CD4-positive, alpha-beta memory T cell (primary cell): ENCODE measurements at regions of chr15 and their contacts with region 1.

Region 1: GRCh38 chr15:50354838-50355618 is at the start of gene GABPB1:
- DNase-seq: peak; percentile 87 to 93 (median 92)
- H3K4me3 ChIP-seq: peak within 1 kb of the TSS; percentile 80 to 95
- H3K4me3 Mint-ChIP-seq: peak within 1 kb of the TSS; percentile 97 to 100 (median 99)
- H3K27ac ChIP-seq: peak within 1 kb of the TSS; percentile 99
- H3K27ac Mint-ChIP-seq: peak within 1 kb of the TSS; percentile 99 to 100 (median 99)
- H3K4me1 ChIP-seq: peaks cover 56% of the 10 kb centered on the region
- H3K4me1 Mint-ChIP-seq: peaks cover 38 to 77% (median 46%) of the 10 kb centered on the region in 4 donors
- H3K27me3 ChIP-seq: no peaks in the 10 kb centered on the region
- H3K27me3 Mint-ChIP-seq: peaks cover 0 to 2% of the 10 kb centered on the region in 2 donors
- total RNA-seq, gene GABPB1: 15.1 to 17.0 TPM

Region 2: GRCh38 chr15:48810414-48811317 is 1544.4 kb before region 1 on chr15 and contains the start of gene CEP152:
- CTCF ChIA-PET with region 1: no interaction called
- POLR2A ChIA-PET with region 1: interaction called, 15 read pairs
- intact Hi-C with region 1: loop called (anchors 2 kb)
- DNase-seq: peak; percentile 97 to 99 (median 98)
- H3K4me3 ChIP-seq: peak within 1 kb of the TSS; percentile 91 to 99
- H3K4me3 Mint-ChIP-seq: peak within 1 kb of the TSS; percentile 80 to 95 (median 94)
- H3K27ac ChIP-seq: peak within 1 kb of the TSS; percentile 67
- H3K27ac Mint-ChIP-seq: peak within 1 kb of the TSS; percentile 82 to 95 (median 88)
- H3K4me1 ChIP-seq: peaks cover 16% of the 10 kb centered on the region
- H3K4me1 Mint-ChIP-seq: peaks cover 19 to 38% (median 24%) of the 10 kb centered on the region in 4 donors
- H3K27me3 ChIP-seq: no peaks in the 10 kb centered on the region
- H3K27me3 Mint-ChIP-seq: peaks cover 0 to 5% of the 10 kb centered on the region in 2 donors
- total RNA-seq, gene CEP152: 14.4 to 15.3 TPM

Region 3: DNA sequence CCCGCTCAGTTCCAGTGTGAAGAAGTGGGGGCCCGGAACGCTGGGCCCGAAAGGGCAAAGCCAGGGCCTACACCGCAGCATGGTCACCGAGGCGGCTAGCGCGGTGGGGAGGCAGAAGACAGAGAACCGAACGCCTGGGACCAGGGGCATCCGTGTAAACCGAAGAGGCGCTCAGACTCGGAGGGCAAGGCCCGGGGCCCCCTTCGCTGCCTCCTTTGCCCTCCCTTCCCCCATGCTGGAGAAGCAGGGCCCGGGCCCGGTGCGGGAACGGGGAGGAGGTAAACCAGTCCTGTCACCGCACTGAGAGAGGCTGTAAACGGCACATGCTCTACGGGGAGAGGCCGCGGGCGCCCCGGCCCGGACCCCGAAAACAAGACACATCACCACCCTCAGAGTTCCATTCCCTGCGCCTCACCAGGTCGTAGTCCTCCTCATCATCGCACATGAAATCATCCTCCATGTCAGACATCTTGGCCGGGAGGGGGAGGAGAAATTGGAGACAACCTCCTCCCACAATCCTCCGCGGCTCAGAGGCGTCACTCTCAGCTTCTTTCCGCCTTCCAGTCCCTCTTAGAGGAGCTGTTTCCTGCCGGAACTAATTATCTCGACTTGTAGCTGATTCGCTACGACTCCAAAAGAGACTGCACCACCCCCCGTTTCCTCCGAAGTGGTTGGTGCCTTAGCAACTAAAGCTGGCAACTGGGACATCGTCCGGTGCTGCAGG is 1199.8 kb before region 1 on chr15 and contains the start of gene COPS2:
- CTCF ChIA-PET with region 1: no interaction called
- POLR2A ChIA-PET with region 1: interaction called, 17 read pairs
- intact Hi-C with region 1: loop called (anchors 1 kb)
- DNase-seq: peak; percentile 93 to 97 (median 95)
- H3K4me3 ChIP-seq: peak within 1 kb of the TSS; percentile 74 to 88
- H3K4me3 Mint-ChIP-seq: peak within 1 kb of the TSS; percentile 97 to 100 (median 100)
- H3K27ac ChIP-seq: peak within 1 kb of the TSS; percentile 94
- H3K27ac Mint-ChIP-seq: peak within 1 kb of the TSS; percentile 97 to 100 (median 99)
- H3K4me1 ChIP-seq: peaks cover 52% of the 10 kb centered on the region
- H3K4me1 Mint-ChIP-seq: peaks cover 33 to 61% (median 49%) of the 10 kb centered on the region in 4 donors
- H3K27me3 ChIP-seq: no peaks in the 10 kb centered on the region
- H3K27me3 Mint-ChIP-seq: no peaks in the 10 kb centered on the region
- total RNA-seq, gene COPS2: 55.5 to 56.9 TPM

Region 4: DNA sequence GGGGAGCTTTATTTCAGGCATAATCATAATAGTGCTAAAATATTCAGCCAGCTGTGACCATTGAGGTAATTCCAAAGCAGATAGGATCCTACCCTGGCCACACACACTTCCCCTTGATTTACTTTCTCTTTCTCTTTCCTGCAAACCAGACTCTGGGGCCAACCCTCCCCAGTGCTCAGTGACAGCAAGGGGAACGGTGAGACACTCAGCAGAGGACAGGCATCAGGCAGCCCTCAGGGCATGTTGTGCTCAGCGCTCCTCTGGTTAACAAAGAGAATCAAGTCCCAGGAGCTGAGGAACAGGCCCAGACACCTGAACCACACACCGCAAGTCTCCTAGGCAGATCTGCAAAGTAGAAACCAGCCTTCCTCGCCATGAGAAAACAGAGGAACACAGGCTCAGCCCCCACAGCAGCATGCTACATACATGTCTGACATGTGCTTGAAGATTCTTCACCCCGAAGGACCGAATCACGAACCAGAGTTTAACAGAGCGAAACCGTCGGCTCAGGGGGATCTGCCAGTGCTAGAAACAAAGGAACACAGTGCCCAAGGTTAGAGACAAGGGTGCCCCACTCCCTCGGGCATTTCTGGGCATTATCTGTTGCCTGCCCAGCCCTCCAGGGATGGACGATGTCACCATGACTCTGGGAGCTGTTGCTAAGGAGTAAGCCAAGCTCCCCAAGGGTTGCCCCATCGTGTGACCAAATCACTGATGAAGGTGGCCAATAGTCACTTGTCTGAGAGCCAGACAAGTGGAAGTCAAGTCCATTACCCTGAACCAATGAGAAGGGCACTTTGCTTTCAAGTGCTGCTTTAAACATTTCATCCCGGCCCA is 107.0 kb before region 1 on chr15:
- CTCF ChIA-PET with region 1: no interaction called
- POLR2A ChIA-PET with region 1: interaction called, 31 read pairs
- intact Hi-C with region 1: no loop called
- DNase-seq: peak; percentile 51 to 64 (median 60)
- H3K4me3 ChIP-seq: peak overlapping the region in 1 of 2 donors; percentile 15
- H3K4me3 Mint-ChIP-seq: peak overlapping the region; percentile 79 to 91 (median 85)
- H3K27ac ChIP-seq: peak overlapping the region; percentile 45
- H3K27ac Mint-ChIP-seq: peak overlapping the region; percentile 91 to 98 (median 96)
- H3K4me1 ChIP-seq: peaks cover 20% of the 10 kb centered on the region
- H3K4me1 Mint-ChIP-seq: peaks cover 21 to 30% (median 25%) of the 10 kb centered on the region in 4 donors
- H3K27me3 ChIP-seq: no peaks in the 10 kb centered on the region
- H3K27me3 Mint-ChIP-seq: no peaks in the 10 kb centered on the region

Region 5: DNA sequence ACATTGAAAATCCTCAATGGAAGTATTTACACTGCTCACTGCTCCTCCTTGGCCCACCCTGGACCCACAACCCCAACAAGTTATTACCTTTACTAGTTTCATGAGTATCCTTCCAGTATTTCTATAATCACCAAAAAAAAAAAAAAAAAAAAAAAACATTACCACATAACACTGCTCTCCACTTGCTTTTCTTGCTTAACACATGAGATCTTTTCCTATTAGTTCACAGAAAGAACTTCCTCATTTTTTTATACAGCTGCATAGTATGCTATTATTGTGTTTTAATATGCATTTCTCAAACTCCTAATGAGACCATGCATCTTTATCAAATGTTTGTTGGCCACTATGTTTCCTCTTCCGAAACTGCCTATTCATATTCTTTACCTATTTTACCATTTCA is 14.6 kb before region 1 on chr15:
- CTCF ChIA-PET with region 1: no interaction called
- POLR2A ChIA-PET with region 1: interaction called, 18 read pairs
- intact Hi-C with region 1: no loop called
- DNase-seq: no peak
- H3K4me3 ChIP-seq: no peak overlapping the region
- H3K4me3 Mint-ChIP-seq: peak overlapping the region in 2 of 8 donors; percentile 2 to 38
- H3K27ac ChIP-seq: no peak overlapping the region
- H3K27ac Mint-ChIP-seq: no peak overlapping the region
- H3K4me1 ChIP-seq: no peaks in the 10 kb centered on the region
- H3K4me1 Mint-ChIP-seq: peaks cover 20 to 25% (median 23%) of the 10 kb centered on the region in 4 donors
- H3K27me3 ChIP-seq: no peaks in the 10 kb centered on the region
- H3K27me3 Mint-ChIP-seq: no peaks in the 10 kb centered on the region

Region 6: GRCh38 chr15:50686468-50687301 is 331.7 kb after region 1 on chr15 and contains the start of gene TRPM7:
- CTCF ChIA-PET with region 1: no interaction called
- POLR2A ChIA-PET with region 1: interaction called, 7 read pairs
- intact Hi-C with region 1: loop called (anchors 1 kb)
- DNase-seq: peak; percentile 86 to 90 (median 90)
- H3K4me3 ChIP-seq: peak within 1 kb of the TSS; percentile 89 to 99
- H3K4me3 Mint-ChIP-seq: peak within 1 kb of the TSS; percentile 98 to 100 (median 99)
- H3K27ac ChIP-seq: peak within 1 kb of the TSS; percentile 99
- H3K27ac Mint-ChIP-seq: peak within 1 kb of the TSS; percentile 98 to 100 (median 99)
- H3K4me1 ChIP-seq: peaks cover 52% of the 10 kb centered on the region
- H3K4me1 Mint-ChIP-seq: peaks cover 32 to 61% (median 45%) of the 10 kb centered on the region in 4 donors
- H3K27me3 ChIP-seq: no peaks in the 10 kb centered on the region
- H3K27me3 Mint-ChIP-seq: no peaks in the 10 kb centered on the region
- total RNA-seq, gene TRPM7: 65.3 to 66.7 TPM

Region 7: DNA sequence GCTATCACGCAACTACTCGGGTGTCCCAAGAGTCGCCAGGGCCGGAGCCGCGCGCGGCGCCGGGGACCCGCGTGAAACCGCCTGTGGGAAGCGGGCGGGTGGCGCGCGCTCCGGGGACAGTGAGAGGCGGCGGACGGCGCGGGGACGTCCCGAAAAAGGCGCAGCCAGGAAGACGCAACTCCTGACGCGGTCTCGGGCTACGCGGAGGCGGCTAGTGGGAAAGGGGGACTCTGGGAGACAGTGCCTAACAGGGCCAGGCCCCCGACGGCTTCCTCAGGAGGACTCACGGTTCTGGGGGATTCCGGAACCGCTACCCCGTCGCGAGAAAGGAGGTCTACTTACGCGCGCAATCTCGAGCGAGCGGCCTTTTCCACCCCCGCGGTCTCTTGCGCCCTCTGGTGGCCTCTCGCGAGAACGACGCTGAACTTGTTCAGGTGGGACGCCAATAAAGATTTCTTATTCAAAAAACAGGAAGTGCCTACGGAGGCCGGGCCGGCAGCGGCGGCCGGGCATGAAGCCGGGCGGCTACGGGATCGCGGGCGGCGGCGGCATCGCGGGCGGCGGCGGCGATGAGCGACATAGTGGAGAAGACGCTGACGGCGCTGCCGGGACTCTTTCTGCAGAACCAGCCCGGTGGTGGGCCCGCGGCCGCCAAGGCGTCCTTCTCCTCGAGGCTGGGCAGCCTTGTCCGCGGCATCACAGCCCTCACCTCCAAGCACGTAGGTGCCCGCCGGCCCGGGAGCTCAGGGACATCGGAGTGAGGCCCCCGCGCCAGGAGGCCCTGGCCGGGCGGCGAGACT is 553.4 kb after region 1 on chr15 and contains the start of gene AP4E1:
- CTCF ChIA-PET with region 1: no interaction called
- POLR2A ChIA-PET with region 1: interaction called, 32 read pairs
- intact Hi-C with region 1: loop called (anchors 1 kb)
- DNase-seq: peak; percentile 93 to 96 (median 94)
- H3K4me3 ChIP-seq: peak within 1 kb of the TSS; percentile 57 to 89
- H3K4me3 Mint-ChIP-seq: peak within 1 kb of the TSS; percentile 90 to 98 (median 92)
- H3K27ac ChIP-seq: peak within 1 kb of the TSS; percentile 100
- H3K27ac Mint-ChIP-seq: peak within 1 kb of the TSS; percentile 96 to 99 (median 98)
- H3K4me1 ChIP-seq: peaks cover 16% of the 10 kb centered on the region
- H3K4me1 Mint-ChIP-seq: peaks cover 15 to 44% (median 19%) of the 10 kb centered on the region in 4 donors
- H3K27me3 ChIP-seq: no peaks in the 10 kb centered on the region
- H3K27me3 Mint-ChIP-seq: no peaks in the 10 kb centered on the region
- total RNA-seq, gene AP4E1: 13.4 to 15.2 TPM

Region 8: DNA sequence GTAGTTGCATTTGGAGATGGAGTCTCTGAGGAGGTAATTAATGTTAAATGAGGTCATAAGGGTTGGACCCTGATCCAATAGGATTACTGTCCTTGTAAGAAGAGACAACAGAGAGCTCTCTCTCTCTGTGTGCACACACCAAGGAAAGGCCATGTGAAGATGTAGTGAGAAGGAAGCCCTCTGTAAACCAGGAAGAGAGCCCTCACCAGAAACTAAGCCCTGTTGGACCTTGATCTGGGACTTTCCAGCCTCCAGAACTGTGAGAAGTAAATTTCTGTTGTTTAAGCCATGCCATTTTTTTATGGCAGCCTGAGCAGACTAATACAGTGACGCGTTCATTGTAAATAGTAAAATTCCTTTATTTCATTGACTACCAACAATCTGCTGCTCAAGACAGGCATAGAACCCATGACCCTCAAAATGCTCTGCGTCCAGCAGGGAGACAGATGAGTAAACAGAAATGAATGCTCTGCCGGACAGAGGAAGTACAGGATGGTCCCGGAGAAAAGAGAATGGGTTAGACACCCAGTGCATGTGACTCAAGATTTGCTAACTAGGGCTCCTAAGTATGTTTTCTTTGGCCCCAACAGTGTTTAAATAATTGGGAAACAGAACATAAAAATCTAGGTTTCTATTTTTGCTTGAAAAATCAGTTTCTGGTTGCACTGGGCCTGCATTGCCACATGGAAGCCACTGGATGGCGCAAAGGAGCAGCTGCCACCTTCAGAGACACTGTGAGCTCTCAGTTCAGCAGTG is 777.5 kb after region 1 on chr15:
- CTCF ChIA-PET with region 1: no interaction called
- POLR2A ChIA-PET with region 1: no interaction called
- intact Hi-C with region 1: no loop called
- DNase-seq: no peak
- H3K4me3 ChIP-seq: no peak overlapping the region
- H3K4me3 Mint-ChIP-seq: no peak overlapping the region
- H3K27ac ChIP-seq: no peak overlapping the region
- H3K27ac Mint-ChIP-seq: no peak overlapping the region
- H3K4me1 ChIP-seq: no peaks in the 10 kb centered on the region
- H3K4me1 Mint-ChIP-seq: no peaks in the 10 kb centered on the region
- H3K27me3 ChIP-seq: no peaks in the 10 kb centered on the region
- H3K27me3 Mint-ChIP-seq: peaks cover 0 to 8% of the 10 kb centered on the region in 2 donors